ENCODE measurements at regions of chr9 and their contacts with region 1.

Region 1: GRCh38 chr9:93566408-93567270 is 9.7 kb upstream of the PHF2 start:
- DNase-seq: peak; percentile 94 to 100 (median 99)
- ATAC-seq: peak; percentile 99
- H3K4me3 ChIP-seq: peak overlapping the region; percentile 76
- H3K4me3 Mint-ChIP-seq: peak overlapping the region; percentile 80 to 91 (median 86)
- H3K27ac ChIP-seq: peak overlapping the region; percentile 92
- H3K27ac Mint-ChIP-seq: peak overlapping the region; percentile 84 to 96 (median 93)
- H3K4me1 ChIP-seq: peaks cover 8 to 9% of the 10 kb centered on the region in 2 donors
- H3K4me1 Mint-ChIP-seq: peaks cover 10 to 25% (median 20%) of the 10 kb centered on the region in 7 donors
- H3K27me3 ChIP-seq: no peaks in the 10 kb centered on the region
- H3K27me3 Mint-ChIP-seq: no peaks in the 10 kb centered on the region

Region 2: GRCh38 chr9:92963831-92964626 is 602.6 kb before region 1 on chr9:
- CTCF ChIA-PET with region 1: no interaction called
- POLR2A ChIA-PET with region 1: no interaction called
- intact Hi-C with region 1: loop called (anchors 1 to 2 kb)
- DNase-seq: peak; percentile 54 to 94 (median 93)
- ATAC-seq: peak; percentile 84
- H3K4me3 ChIP-seq: peak overlapping the region; percentile 85
- H3K4me3 Mint-ChIP-seq: peak overlapping the region; percentile 86 to 98 (median 93)
- H3K27ac ChIP-seq: peak overlapping the region; percentile 85
- H3K27ac Mint-ChIP-seq: peak overlapping the region; percentile 96 to 99 (median 98)
- H3K4me1 ChIP-seq: peaks cover 60 to 67% of the 10 kb centered on the region in 2 donors
- H3K4me1 Mint-ChIP-seq: peaks cover 40 to 63% (median 56%) of the 10 kb centered on the region in 7 donors
- H3K27me3 ChIP-seq: no peaks in the 10 kb centered on the region
- H3K27me3 Mint-ChIP-seq: no peaks in the 10 kb centered on the region

Region 3: GRCh38 chr9:93134015-93134739 is 432.5 kb before region 1 on chr9 and contains the start of gene NINJ1:
- CTCF ChIA-PET with region 1: no interaction called
- POLR2A ChIA-PET with region 1: no interaction called
- intact Hi-C with region 1: loop called (anchors 1 to 2 kb)
- DNase-seq: peak; percentile 72 to 93 (median 83)
- ATAC-seq: peak; percentile 87
- H3K4me3 ChIP-seq: peak within 1 kb of the TSS; percentile 68
- H3K4me3 Mint-ChIP-seq: peak within 1 kb of the TSS; percentile 87 to 92 (median 90)
- H3K27ac ChIP-seq: peak within 1 kb of the TSS; percentile 99
- H3K27ac Mint-ChIP-seq: peak within 1 kb of the TSS; percentile 84 to 98 (median 98)
- H3K4me1 ChIP-seq: peaks cover 27 to 55% of the 10 kb centered on the region in 2 donors
- H3K4me1 Mint-ChIP-seq: peaks cover 40 to 80% (median 63%) of the 10 kb centered on the region in 7 donors
- H3K27me3 ChIP-seq: no peaks in the 10 kb centered on the region
- H3K27me3 Mint-ChIP-seq: no peaks in the 10 kb centered on the region
- total RNA-seq, gene NINJ1: 30.7 to 163 (median 64.7) TPM

Region 4: DNA sequence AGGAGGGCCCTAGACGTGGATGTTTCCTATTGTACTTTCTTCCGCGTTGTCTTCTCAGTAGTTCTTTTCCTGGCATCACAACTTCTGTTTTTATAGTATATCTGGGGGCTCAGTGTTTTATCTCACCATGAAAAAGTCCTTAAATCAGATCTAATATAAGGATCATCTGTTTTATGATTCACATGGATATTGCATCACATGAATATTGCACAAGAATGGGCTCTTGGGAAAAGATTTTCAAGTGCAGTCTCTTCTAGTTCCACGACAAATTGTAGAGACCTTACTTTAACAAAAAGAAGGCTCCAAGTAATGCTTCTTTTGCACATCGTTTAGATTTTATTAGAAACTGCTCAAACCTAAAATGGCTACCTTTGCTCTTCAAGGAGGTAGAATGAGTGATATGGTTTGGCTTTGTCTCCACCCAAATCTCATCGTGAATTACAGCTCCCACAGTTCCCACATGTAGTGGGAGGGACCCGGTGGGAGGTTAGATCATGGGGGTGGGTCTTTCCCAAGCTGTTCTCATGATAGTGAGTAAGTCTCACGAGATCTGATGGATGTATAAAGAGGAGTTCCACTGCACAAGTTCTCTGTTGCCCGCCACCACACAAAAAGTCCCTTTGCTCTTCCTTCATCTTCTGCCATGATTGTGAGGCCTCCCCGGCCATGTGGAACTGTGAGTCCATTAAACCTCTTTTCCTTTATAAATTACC is 168.8 kb before region 1 on chr9:
- CTCF ChIA-PET with region 1: no interaction called
- POLR2A ChIA-PET with region 1: no interaction called
- intact Hi-C with region 1: loop called in 1 of 2 experiments (anchors 1 kb)
- DNase-seq: no peak
- ATAC-seq: no peak
- H3K4me3 ChIP-seq: no peak overlapping the region
- H3K4me3 Mint-ChIP-seq: no peak overlapping the region
- H3K27ac ChIP-seq: no peak overlapping the region
- H3K27ac Mint-ChIP-seq: no peak overlapping the region
- H3K4me1 ChIP-seq: no peaks in the 10 kb centered on the region
- H3K4me1 Mint-ChIP-seq: no peaks in the 10 kb centered on the region
- H3K27me3 ChIP-seq: no peaks in the 10 kb centered on the region
- H3K27me3 Mint-ChIP-seq: peaks cover 0 to 16% (median 10%) of the 10 kb centered on the region in 5 donors

Region 5: DNA sequence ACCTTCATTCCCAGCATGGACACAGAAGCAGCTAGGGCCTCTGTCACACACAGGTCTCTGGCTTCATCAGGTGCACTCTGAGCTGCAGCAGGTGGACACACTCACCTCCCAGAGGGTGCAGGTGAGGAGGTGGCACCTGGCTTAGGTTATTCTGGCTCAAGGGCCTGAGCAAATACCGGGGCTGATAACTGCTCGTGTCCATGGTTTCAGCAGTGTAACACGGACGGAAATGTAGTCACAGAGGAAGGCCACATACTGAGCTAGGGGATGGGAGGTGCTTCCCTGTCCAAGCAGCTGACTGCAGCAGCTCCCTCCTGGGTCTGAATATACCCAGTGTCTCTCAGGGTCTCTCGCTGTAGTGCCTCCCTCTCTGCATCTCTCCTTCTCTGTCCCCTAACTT is 15.5 kb after region 1 on chr9:
- CTCF ChIA-PET with region 1: interaction called, 4 read pairs
- POLR2A ChIA-PET with region 1: interaction called, 9 read pairs
- intact Hi-C with region 1: loop called in 1 of 2 experiments (anchors 2 kb)
- DNase-seq: no peak
- ATAC-seq: no peak
- H3K4me3 ChIP-seq: no peak overlapping the region
- H3K4me3 Mint-ChIP-seq: no peak overlapping the region
- H3K27ac ChIP-seq: no peak overlapping the region
- H3K27ac Mint-ChIP-seq: peak overlapping the region in 3 of 9 donors; percentile 5 to 77 (median 16)
- H3K4me1 ChIP-seq: peaks cover 4 to 21% of the 10 kb centered on the region in 2 donors
- H3K4me1 Mint-ChIP-seq: peaks cover 36 to 83% (median 71%) of the 10 kb centered on the region in 7 donors
- H3K27me3 ChIP-seq: no peaks in the 10 kb centered on the region
- H3K27me3 Mint-ChIP-seq: no peaks in the 10 kb centered on the region

Region 6: DNA sequence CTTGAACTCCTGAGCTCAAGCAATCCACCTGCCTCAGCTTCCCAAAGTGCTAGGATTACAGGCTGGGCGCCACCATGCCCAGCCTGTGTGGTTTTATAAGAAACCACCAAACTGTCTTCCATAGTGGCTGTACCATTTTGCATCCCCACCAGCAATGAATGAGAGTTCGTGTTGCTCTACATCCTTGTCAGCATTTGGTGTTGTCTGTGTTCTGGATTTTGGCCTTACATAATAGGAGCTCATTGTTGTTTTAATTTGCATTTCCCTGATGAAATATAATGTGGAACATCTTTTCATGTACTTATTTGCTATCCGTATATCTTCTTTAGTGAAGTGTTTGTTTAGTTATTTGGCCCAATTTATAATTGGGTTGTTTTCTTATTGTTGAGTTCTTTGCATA is 39.5 kb after region 1 on chr9:
- CTCF ChIA-PET with region 1: no interaction called
- POLR2A ChIA-PET with region 1: no interaction called
- intact Hi-C with region 1: no loop called
- DNase-seq: no peak
- ATAC-seq: no peak
- H3K4me3 ChIP-seq: no peak overlapping the region
- H3K4me3 Mint-ChIP-seq: no peak overlapping the region
- H3K27ac ChIP-seq: no peak overlapping the region
- H3K27ac Mint-ChIP-seq: no peak overlapping the region
- H3K4me1 ChIP-seq: no peaks in the 10 kb centered on the region
- H3K4me1 Mint-ChIP-seq: peaks cover 5 to 49% (median 31%) of the 10 kb centered on the region in 7 donors
- H3K27me3 ChIP-seq: no peaks in the 10 kb centered on the region
- H3K27me3 Mint-ChIP-seq: no peaks in the 10 kb centered on the region

Region 7: DNA sequence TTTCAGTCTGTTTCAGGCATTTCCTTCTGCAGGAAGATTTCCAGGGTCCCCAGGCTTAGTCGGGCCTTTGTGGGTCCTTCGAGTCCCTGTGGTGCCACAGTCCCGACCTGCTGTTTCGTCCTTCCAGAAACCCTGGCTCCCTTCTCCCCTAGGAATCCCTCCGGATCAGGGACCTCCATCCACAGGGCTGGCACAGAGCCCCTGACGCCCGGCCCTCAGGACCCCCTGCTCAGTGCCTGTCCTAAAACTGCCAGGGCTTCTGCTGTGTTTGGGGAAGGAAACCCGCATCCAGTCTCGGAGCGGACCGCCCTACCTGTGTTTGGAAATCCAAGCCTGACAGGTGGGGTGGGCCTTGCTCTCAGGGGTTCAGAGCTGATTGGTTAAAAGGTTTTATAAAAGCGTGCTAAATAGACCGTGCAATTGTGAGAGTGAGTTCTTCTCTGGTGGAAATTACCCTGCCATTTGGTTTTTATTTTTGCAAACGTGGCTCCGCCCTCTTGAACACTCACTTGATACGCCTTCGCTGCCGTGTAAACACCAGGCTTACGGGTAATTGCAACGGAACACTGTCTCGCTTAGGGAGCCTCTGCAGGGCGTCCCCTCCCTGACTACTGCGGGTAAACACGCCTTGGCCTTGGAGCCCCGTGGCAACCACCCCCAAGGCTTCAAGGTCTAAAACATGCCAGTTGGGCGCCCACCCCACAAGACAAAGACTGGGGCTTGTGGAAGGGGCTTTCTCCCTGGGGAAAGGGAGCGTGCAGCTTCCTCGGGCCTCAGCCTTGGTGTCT is 130.9 kb after region 1 on chr9:
- CTCF ChIA-PET with region 1: no interaction called
- POLR2A ChIA-PET with region 1: no interaction called
- intact Hi-C with region 1: no loop called
- DNase-seq: no peak
- ATAC-seq: no peak
- H3K4me3 ChIP-seq: no peak overlapping the region
- H3K4me3 Mint-ChIP-seq: no peak overlapping the region
- H3K27ac ChIP-seq: no peak overlapping the region
- H3K27ac Mint-ChIP-seq: no peak overlapping the region
- H3K4me1 ChIP-seq: no peaks in the 10 kb centered on the region
- H3K4me1 Mint-ChIP-seq: no peaks in the 10 kb centered on the region
- H3K27me3 ChIP-seq: no peaks in the 10 kb centered on the region
- H3K27me3 Mint-ChIP-seq: peaks cover 4 to 33% (median 18%) of the 10 kb centered on the region in 5 donors

Region 8: GRCh38 chr9:94259077-94259892 is 692.6 kb after region 1 on chr9 and contains the start of gene ZNF169:
- CTCF ChIA-PET with region 1: no interaction called
- POLR2A ChIA-PET with region 1: no interaction called
- intact Hi-C with region 1: loop called in 1 of 2 experiments (anchors 1 kb)
- DNase-seq: peak; percentile 68 to 84 (median 77)
- ATAC-seq: peak; percentile 100
- H3K4me3 ChIP-seq: peak within 1 kb of the TSS; percentile 99
- H3K4me3 Mint-ChIP-seq: peak within 1 kb of the TSS; percentile 97 to 99 (median 99)
- H3K27ac ChIP-seq: peak within 1 kb of the TSS; percentile 66
- H3K27ac Mint-ChIP-seq: peak within 1 kb of the TSS; percentile 93 to 97 (median 95)
- H3K4me1 ChIP-seq: peaks cover 7% of the 10 kb centered on the region in 2 donors
- H3K4me1 Mint-ChIP-seq: peaks cover 28 to 56% (median 43%) of the 10 kb centered on the region in 7 donors
- H3K27me3 ChIP-seq: no peaks in the 10 kb centered on the region
- H3K27me3 Mint-ChIP-seq: peaks cover 4 to 15% (median 6%) of the 10 kb centered on the region in 5 donors
- total RNA-seq, gene ZNF169: 5.0 to 28.4 (median 12.9) TPM